Activated naive CD4-positive, alpha-beta T cell treated with anti-CD3 and anti-CD28 coated beads for 36 hours (primary cell): ENCODE measurements at regions of chr11 and their contacts with region 1.

Region 1: DNA sequence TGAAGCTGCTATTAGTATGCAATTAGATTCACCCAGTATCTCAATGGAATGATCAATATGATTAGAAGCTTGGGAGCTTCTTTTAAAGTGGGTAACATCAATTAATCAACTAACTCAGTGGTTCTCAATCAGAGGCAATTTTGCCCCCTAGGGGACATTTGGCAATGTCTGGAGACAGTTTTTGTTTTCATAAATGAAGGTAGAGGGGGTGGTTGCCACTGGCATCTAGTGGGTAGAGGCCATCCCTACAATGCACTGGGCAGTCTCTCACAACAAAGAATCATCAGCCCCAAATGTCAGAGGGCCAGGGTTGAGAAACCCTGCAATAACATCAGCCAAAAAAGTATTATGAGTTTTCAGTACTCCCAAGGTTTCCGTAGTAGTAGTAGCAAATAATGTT is 5.9 kb upstream of the AMOTL1 start:
- DNase-seq: peak; percentile 38
- H3K4me3 Mint-ChIP-seq: no peak overlapping the region
- H3K27ac Mint-ChIP-seq: no peak overlapping the region
- H3K4me1 Mint-ChIP-seq: no peaks in the 10 kb centered on the region
- H3K27me3 Mint-ChIP-seq: peaks cover 10% of the 10 kb centered on the region

Region 2: DNA sequence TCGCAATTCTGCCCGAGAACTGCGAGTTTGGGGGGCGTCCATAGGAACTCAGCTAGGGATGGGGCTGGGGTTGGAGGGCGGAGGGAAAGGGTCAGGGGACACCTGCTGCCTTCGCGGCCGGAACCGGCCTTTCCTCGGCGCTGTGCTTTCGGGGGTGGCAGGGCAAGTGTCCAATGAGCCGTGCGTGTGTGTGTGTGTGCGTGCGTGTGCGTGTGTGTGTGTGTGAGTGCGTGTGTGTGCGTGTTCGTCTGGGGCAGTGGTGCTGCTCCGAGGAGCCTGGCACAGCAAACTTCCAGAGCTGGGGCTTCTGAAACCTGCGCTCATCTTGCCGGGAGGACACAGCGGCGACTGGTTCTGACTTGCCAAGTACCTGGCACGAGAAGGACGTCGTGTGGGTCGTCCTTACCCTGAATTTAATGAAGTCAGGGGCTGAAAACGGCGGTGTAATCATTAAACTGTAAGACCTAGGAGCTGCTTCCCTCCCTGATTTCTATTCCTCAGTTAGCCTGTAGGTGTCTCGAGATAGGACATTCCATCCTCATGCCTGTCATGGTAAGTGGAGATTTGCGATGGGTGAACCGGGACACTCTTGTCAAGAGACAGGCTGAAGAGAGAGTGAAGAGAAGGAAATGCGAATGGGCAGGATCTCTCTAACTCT is 21.1 kb before region 1 on chr11:
- CTCF ChIA-PET with region 1: interaction called, 3 read pairs
- intact Hi-C with region 1: loop called (anchors 2 kb)
- DNase-seq: peak; percentile 4
- H3K4me3 Mint-ChIP-seq: peak overlapping the region; percentile 68
- H3K27ac Mint-ChIP-seq: no peak overlapping the region
- H3K4me1 Mint-ChIP-seq: peaks cover 12% of the 10 kb centered on the region
- H3K27me3 Mint-ChIP-seq: peaks cover 32% of the 10 kb centered on the region